Activated CD4-positive, alpha-beta memory T cell treated with anti-CD3 and anti-CD28 coated beads for 36 hours (primary cell): ENCODE measurements at regions of chr4 and their contacts with region 1.

Region 1: DNA sequence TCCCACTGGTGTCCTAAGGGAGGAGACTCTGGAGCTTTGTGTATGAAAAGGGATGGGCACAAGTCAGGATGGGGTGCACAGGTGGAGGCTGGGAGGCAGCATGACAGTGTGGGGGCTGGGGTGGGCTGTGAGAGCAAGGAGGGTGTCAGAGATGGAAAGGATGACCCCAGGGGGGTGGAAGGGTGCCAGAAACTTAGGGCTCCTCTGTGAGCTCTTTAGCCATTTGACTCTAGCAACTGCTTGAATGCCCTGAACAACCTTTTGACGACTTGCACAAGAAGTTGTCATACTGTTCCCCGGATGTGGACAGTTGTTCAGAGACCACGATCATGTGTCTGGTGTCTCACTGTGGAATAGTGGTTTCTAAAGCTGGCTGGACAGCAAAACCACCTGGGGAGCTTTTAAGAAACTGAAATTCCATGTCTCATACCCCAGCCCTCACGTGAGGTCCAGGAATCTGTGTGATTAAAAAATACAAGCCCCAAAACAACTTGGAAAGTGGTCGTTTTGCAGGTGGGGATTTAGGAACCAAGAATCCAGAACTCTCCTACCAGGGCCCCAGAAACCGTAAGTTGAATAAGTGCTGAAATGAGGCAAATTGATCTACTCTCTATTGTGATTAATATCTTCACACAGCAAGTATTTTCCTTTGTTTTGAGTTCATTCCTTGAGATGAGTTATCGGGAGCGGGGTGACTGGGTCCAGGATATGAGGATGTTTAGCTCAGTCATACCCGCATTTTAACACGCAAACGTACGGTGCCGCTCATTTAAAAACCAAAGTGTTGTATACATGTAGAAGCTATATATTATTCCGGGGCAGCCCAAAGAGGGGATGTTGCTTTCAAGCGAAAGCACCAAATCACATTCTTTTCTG is 3.4 kb downstream of the RHOH start:
- DNase-seq: peak; percentile 91
- H3K4me3 Mint-ChIP-seq: peak overlapping the region; percentile 93
- H3K27ac Mint-ChIP-seq: peak overlapping the region; percentile 98
- H3K4me1 Mint-ChIP-seq: peaks cover 39% of the 10 kb centered on the region
- H3K27me3 Mint-ChIP-seq: no peaks in the 10 kb centered on the region

Region 2: GRCh38 chr4:39458505-39459300 is 741.5 kb before region 1 on chr4 and contains the starts of genes LIAS and RPL9:
- CTCF ChIA-PET with region 1: no interaction called
- POLR2A ChIA-PET with region 1: no interaction called
- intact Hi-C with region 1: loop called (anchors 5 kb)
- DNase-seq: peak; percentile 96
- H3K4me3 Mint-ChIP-seq: peak within 1 kb of the TSS; percentile 93
- H3K27ac Mint-ChIP-seq: peak within 1 kb of the TSS; percentile 97
- H3K4me1 Mint-ChIP-seq: peaks cover 48% of the 10 kb centered on the region
- H3K27me3 Mint-ChIP-seq: peaks cover 1% of the 10 kb centered on the region
- total RNA-seq, gene LIAS: 23.2 to 23.7 TPM
- total RNA-seq, gene RPL9: 2,178 to 2,222 TPM

Region 3: GRCh38 chr4:40056716-40057585 is 143.3 kb before region 1 on chr4 and contains the start of gene N4BP2:
- CTCF ChIA-PET with region 1: interaction called, 3 read pairs
- POLR2A ChIA-PET with region 1: interaction called, 20 read pairs
- intact Hi-C with region 1: loop called (anchors 1 kb)
- DNase-seq: peak; percentile 78
- H3K4me3 Mint-ChIP-seq: peak within 1 kb of the TSS; percentile 92
- H3K27ac Mint-ChIP-seq: peak within 1 kb of the TSS; percentile 98
- H3K4me1 Mint-ChIP-seq: peaks cover 32% of the 10 kb centered on the region
- H3K27me3 Mint-ChIP-seq: no peaks in the 10 kb centered on the region
- total RNA-seq, gene N4BP2: 19.3 to 21.9 TPM

Region 4: DNA sequence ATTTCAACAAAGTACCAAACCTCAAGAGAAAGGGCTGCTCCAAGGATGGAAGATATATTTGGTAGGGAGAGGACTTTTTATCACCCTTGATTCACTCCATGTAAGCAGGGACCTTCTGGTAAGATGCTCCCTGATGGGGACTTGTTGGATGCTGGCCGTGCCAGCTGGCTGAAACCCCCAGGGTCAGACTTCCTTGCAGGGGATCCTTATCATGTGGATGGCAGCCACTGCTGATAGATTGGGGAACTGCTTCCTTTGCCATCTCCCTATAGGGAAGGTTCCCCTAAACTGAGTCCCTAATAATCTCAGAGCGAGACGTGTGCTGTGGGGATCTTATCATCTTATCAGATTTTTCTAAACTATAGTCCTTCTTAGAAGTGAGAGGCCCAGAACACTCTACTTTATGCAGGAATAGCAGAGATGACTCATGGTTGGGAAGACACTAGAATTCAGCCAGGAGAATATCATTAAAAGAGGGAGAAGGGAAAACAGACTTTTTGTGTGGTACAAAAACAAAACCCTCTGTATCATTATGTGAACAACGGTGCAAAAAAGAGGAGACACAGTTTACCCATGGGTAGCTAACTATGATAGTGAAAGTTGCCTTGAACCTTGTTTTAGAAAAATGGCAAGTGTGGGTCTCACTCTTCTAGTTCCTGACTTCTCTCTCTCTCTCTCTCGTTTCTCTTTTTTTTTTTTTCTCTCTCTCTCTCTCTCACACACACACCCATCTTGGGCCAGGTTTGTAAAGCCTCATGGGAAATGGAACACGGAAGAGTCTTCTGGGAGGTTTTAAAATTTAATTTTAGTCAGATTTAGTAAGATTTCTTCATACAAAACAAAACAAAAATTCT is 12.7 kb after region 1 on chr4:
- CTCF ChIA-PET with region 1: interaction called, 5 read pairs
- POLR2A ChIA-PET with region 1: interaction called, 133 read pairs
- intact Hi-C with region 1: loop called (anchors 1 kb)
- DNase-seq: no peak
- H3K4me3 Mint-ChIP-seq: peak overlapping the region; percentile 73
- H3K27ac Mint-ChIP-seq: peak overlapping the region; percentile 91
- H3K4me1 Mint-ChIP-seq: peaks cover 89% of the 10 kb centered on the region
- H3K27me3 Mint-ChIP-seq: no peaks in the 10 kb centered on the region

Region 5: DNA sequence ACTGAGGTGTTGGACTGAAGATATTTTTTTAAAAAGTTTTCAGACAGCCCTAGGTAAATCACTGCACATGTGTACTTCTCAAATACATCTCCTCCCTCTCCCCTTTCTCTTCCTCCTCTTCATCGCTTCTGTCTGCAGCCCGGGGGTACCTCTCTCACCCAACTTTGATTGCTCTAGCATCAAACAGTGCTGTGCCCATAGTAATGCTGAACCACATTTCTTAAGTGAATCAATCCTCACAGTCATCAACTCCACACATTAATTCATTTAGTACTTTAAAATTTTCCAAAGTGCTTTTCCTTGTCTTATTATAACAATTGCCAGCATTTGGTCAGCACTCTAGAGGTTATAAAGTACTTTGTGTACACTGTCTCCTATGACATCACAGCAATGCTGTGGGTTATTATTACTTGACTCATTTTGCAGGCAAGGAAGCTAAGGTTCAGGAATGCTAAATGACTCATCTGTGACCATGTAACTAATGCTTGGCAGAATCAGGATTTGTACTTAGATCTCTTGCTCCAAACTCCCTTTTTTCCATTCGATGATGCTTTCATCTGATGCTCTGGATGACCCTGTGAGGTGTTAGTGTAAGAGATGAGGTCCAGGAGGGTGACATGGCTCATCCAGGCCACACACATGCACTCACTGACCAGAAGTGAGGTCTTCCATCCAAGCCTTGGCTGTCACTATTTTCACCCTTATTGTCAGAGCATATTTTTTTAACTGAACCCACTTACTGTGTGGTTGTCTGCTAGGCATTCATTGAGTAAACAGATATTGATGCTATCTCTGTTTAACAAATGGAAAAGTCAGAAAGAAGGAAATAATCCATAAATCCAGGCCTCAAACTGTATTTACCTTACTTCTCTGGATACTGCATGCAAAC is 55.4 kb after region 1 on chr4:
- CTCF ChIA-PET with region 1: no interaction called
- POLR2A ChIA-PET with region 1: interaction called, 4 read pairs
- intact Hi-C with region 1: loop called (anchors 1 kb)
- DNase-seq: no peak
- H3K4me3 Mint-ChIP-seq: no peak overlapping the region
- H3K27ac Mint-ChIP-seq: peak overlapping the region; percentile 72
- H3K4me1 Mint-ChIP-seq: peaks cover 59% of the 10 kb centered on the region
- H3K27me3 Mint-ChIP-seq: no peaks in the 10 kb centered on the region

Region 6: DNA sequence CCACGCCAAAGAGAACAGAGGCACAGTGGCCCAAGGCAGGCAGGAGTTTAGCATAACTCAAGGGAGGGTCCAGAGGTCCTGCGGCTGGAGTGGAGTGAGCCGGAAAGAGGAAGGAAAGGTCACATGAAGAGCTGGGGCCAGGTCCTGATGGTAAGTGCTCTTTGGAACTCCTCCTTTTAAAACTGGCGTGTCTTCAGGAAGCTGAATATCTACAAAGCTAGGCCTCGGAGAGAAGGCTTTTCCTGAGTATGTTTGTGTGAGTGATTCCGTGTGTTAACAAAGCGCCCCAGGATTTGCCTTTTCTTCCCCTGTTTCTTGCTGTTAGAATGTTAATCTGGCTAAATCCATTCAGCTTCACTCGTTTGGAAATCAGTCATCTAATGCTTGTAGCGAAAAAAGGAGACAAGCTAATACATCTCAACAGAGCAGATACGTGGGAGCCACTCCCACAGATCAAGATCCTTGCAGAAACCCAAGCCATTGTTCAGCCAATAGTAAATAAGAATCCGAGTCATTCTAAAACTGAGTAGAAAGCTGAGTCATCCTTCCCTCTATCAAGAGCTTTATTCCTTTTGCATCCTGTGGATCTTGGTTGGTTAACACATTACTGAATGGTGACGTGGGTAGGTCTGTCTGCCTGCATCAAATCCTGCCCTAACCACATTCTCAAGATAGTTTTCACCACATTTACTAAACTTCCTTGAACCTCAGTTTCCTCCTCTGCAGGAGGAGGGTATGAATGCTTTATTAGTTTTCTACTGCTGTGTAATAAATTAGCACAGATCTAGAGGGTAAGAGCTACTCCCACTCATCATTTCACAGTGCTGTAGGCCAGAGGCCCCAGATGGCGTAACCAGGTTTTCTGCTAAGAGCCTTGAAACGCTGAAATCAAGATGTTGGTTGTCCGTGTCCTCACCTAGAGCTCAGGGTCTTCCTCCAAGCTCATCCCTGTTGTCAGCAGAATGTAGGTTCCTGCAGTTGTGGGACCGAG is 472.6 kb after region 1 on chr4:
- CTCF ChIA-PET with region 1: no interaction called
- POLR2A ChIA-PET with region 1: interaction called, 3 read pairs
- intact Hi-C with region 1: loop called (anchors 10 kb)
- DNase-seq: peak; percentile 71
- H3K4me3 Mint-ChIP-seq: peak overlapping the region; percentile 63
- H3K27ac Mint-ChIP-seq: peak overlapping the region; percentile 92
- H3K4me1 Mint-ChIP-seq: peaks cover 50% of the 10 kb centered on the region
- H3K27me3 Mint-ChIP-seq: no peaks in the 10 kb centered on the region